ENCODE measurements at regions of chr6 and their contacts with region 1.

Region 1: DNA sequence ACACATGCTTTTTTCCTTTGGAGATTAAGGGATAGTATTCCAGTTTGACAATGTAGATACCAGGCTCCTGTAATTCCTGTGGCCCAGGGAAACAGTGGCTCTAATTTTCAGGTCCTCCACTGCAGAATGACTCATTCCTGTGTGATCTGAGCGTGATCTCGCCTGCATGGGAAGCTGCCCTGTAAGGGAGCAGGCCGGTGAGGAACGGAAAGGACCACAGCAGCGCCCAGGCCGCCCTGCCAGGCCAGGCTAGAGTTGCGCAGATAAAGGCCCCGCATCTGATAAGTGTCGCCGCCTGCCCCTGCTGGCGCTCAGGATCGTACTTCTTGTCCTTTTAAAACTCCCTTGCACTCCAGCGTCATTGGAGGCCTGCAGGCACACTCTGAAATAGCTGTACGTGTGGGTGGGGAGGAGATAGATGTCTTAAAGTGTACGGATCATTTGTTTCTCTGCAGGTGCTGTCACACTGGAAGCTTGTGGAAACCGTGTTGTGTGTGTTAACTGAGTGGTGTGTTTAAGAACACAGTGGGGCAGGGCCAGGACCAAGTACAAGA is 60.7 kb downstream of the SYNJ2 start:
- DNase-seq: peak; percentile 79
- H3K4me3 ChIP-seq: no peak overlapping the region
- H3K27ac ChIP-seq: peak overlapping the region; percentile 77 to 88 (median 78)
- H3K4me1 ChIP-seq: peaks cover 0 to 69% (median 52%) of the 10 kb centered on the region in 4 donors
- H3K27me3 ChIP-seq: no peaks in the 10 kb centered on the region
- CTCF ChIP-seq: no peak
- EP300 ChIP-seq: peak in 2 of 4 donors; percentile 35 to 55
- POLR2A ChIP-seq: no peak

Region 2: DNA sequence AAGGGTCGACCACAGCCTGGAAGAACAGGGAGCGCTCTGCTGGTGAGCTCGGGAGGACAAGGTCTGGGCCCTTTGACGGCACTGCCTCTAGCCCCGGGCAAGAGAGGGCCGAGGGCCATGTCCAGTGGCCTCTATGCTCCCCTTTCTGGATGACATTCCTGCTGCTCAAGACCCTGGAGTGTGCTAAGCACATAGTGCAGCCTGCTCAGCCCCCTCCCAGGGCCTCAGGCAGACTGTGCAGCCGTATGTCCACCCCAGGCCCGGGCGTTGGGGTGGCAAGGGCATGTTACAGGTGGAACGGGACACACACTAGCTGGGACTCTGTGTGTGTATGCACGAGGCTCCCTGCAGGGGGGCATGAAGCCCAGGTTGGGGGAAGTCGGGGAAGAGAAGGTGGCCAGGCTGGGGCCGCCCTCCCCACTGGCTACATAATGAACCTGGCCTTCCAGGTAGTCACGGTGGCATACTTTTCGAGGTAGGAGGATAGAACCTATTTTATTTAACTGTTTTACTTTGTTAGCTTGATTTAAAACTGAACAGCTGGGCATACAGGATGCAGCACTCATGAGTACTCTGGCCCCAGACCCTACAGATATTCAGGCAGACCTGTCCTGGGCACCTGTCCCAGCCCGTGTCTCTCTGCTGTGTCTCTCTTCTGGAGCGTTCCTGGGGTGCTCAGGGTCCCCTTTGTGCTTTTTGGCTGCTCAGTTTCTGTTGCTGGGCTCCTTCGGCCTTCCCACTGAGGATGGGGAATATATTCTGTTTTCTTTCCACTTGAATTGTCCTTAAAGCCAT is 54.2 kb before region 1 on chr6:
- intact Hi-C with region 1: no loop called
- DNase-seq: peak; percentile 53
- H3K4me3 ChIP-seq: no peak overlapping the region
- H3K27ac ChIP-seq: peak overlapping the region; percentile 67 to 77 (median 74)
- H3K4me1 ChIP-seq: peaks cover 0 to 46% (median 44%) of the 10 kb centered on the region in 4 donors
- H3K27me3 ChIP-seq: no peaks in the 10 kb centered on the region
- CTCF ChIP-seq: no peak
- EP300 ChIP-seq: no peak
- POLR2A ChIP-seq: no peak

Region 3: DNA sequence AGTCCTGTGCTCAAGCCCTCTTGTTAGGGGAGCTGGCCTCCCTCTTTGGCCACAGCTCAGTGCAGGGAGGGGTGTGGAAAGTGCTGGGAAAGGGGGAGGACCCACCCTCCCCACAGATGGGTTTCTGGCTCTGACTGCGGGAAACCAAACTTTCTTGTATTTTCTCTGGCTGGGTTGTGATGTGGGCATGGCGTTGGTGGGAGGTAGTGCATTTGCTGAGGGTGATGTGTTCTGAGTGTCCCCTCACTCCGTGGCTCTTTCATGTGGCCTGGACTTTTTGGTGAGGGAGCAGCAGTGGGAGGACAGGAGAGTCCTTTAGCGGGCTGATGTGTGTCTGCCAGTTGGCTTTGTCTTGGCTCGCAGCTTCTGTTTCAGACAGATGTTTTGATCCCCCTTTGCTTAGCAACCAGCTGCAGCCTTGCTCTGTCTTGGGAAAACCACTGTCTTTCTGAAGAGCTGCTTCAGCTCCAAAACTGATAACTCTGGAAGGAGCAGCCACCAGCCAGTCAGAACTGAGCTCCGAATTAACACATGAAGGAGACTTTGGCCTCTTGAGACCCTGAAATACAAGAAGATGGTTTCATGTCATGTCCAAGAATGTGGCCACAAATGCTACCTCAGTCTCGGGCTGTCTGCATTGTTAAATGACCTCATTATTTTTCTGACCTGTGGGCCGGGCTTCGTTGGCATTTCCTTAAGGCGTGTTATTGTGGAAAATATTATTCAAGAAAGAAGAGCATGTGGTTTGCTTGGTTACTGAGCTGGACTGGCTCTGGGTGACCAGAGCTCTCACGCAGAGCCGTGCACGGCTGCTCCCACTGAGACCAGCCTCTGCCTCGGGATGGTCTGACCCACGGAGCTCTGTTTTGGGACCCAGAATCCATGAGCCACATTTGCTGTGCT is 39.1 kb before region 1 on chr6:
- intact Hi-C with region 1: loop called (anchors 1 kb)
- DNase-seq: peak; percentile 87
- H3K4me3 ChIP-seq: no peak overlapping the region
- H3K27ac ChIP-seq: peak overlapping the region; percentile 77 to 90 (median 82)
- H3K4me1 ChIP-seq: peaks cover 0 to 69% (median 53%) of the 10 kb centered on the region in 4 donors
- H3K27me3 ChIP-seq: no peaks in the 10 kb centered on the region
- CTCF ChIP-seq: no peak
- EP300 ChIP-seq: peak in 1 of 4 donors; percentile 43
- POLR2A ChIP-seq: no peak